ENCODE measurements at regions of chr10 and their contacts with region 1.

Region 1: GRCh38 chr10:100518761-100519241 is 860 bp downstream of the SEC31B start:
- DNase-seq: peak; percentile 51 to 56 (median 53)
- H3K4me3 ChIP-seq: peak overlapping the region in 3 of 7 experiments; percentile 46 to 62 (median 62)
- H3K27ac ChIP-seq: no peak overlapping the region
- H3K4me1 ChIP-seq: peaks cover 0 to 10% (median 3%) of the 10 kb centered on the region in 4 experiments
- H3K27me3 ChIP-seq: peaks cover 0 to 20% (median 13%) of the 10 kb centered on the region in 5 experiments

Region 2: DNA sequence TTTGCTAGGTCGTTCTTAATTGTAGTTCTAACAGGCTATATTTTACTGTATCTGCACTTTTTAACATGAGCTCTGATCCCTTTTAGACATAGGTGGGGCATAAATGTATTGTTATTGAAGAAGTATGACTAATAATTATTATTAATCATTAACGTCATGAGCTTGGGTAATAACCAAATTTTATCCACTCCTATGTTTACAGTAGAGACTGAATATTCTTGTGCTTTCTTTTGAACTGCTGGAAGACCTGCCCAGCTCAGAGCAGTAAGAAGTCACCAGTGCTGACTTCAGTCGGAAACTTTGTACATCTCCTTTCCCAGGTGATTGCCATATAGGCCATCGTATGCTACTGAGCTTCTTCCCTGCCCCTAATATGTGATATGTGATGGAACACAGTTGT is 207.5 kb before region 1 on chr10:
- CTCF ChIA-PET with region 1: no interaction called
- POLR2A ChIA-PET with region 1: no interaction called
- DNase-seq: no peak
- H3K4me3 ChIP-seq: no peak overlapping the region
- H3K27ac ChIP-seq: no peak overlapping the region
- H3K4me1 ChIP-seq: no peaks in the 10 kb centered on the region
- H3K27me3 ChIP-seq: peaks cover 0 to 9% (median 7%) of the 10 kb centered on the region in 5 experiments

Region 3: GRCh38 chr10:100338434-100339036 is 180.3 kb before region 1 on chr10:
- CTCF ChIA-PET with region 1: interaction called, 110 read pairs
- POLR2A ChIA-PET with region 1: interaction called, 3 read pairs
- DNase-seq: peak; percentile 53 to 73 (median 62)
- H3K4me3 ChIP-seq: no peak overlapping the region
- H3K27ac ChIP-seq: no peak overlapping the region
- H3K4me1 ChIP-seq: peaks cover 0 to 24% (median 3%) of the 10 kb centered on the region in 4 experiments
- H3K27me3 ChIP-seq: peaks cover 0 to 9% (median 2%) of the 10 kb centered on the region in 5 experiments

Region 4: DNA sequence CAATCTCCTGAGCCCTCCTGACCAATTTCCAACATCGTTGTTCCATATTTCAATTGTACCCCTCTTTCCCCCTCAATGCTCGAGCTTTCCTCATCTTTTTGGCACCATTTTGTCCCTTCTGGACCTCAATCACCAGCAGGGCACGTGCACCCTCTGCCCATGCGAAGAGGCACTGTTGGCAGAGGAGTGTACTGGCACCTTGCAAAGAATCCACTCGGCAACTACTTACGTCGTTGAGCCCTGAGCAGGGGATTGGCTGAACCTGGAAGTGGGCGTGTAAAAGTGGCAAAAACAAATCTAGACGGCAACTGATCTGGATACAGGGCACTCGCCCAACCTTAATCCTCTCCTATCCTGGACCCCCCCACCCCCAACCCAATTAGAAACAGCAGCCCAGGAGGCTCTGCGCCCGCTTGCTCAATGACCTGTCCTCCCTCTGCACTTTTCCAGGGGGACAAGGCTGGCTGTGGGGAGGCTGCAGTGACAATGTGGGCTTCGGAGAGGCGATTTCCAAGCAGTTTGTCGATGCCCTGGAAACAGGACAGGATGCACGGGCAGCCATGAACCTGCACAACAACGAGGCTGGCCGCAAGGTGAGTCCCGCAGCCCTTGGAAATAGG is 37.2 kb before region 1 on chr10:
- CTCF ChIA-PET with region 1: interaction called, 10 read pairs
- POLR2A ChIA-PET with region 1: no interaction called
- DNase-seq: peak; percentile 91 to 96 (median 94)
- H3K4me3 ChIP-seq: peak overlapping the region in 6 of 7 experiments; percentile 45 to 73 (median 61)
- H3K27ac ChIP-seq: no peak overlapping the region
- H3K4me1 ChIP-seq: peaks cover 0 to 22% (median 15%) of the 10 kb centered on the region in 4 experiments
- H3K27me3 ChIP-seq: peaks cover 2 to 41% (median 13%) of the 10 kb centered on the region in 5 experiments

Region 5: DNA sequence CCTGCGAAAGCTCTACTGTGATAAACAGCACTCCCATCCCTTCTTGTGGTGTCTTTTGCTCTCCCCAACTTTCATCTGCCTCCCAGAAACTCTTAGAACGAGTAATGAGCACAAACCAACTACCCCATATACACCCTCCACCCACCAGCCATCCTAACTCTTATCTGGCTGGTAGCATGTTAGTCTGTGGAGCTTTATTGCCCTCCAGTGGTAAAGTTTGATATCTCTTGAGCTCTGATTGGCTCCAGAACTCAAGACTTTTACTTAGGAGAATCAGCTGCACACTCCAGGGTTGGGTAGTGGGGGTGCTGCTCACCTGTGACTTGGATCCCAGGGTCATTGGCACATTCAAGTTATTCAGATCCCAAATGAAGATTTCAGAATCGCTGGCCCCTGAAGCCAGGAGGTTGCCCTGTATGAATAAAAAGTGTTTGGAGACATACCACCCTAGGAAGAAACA is 10.1 kb before region 1 on chr10:
- CTCF ChIA-PET with region 1: interaction called, 26 read pairs
- POLR2A ChIA-PET with region 1: interaction called, 4 read pairs
- DNase-seq: peak; percentile 64 to 82 (median 78)
- H3K4me3 ChIP-seq: no peak overlapping the region
- H3K27ac ChIP-seq: no peak overlapping the region
- H3K4me1 ChIP-seq: peaks cover 3 to 28% (median 11%) of the 10 kb centered on the region in 4 experiments
- H3K27me3 ChIP-seq: no peaks in the 10 kb centered on the region

Region 6: DNA sequence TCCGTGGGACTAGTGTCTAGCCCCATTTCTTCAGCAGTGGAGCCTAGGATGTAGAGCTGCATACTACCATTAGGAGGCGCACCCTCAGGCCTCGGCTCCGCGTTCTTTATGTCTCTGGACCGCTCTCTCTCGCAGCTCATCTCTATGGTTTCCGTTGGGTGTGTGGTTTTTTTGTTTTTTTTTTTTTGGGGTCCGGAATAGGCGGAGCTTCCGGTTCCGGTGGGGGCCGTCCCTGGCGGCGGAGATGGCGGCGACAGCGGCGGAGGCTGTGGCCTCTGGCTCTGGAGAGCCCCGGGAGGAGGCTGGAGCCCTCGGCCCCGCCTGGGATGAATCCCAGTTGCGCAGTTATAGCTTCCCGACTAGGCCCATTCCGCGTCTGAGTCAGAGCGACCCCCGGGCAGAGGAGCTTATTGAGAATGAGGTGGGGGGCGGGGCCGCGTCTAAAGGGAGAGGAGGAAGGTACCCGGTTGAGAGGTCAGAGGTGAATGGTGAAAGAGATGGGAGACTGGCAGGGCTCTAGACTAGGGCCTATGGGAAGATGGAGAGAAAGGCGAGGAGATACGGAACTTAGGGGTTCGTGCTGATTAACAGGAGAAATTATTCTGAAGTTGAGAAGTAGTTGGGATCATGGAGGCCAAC is 17.0 kb after region 1 on chr10 and contains the start of gene HIF1AN:
- CTCF ChIA-PET with region 1: interaction called, 38 read pairs
- POLR2A ChIA-PET with region 1: no interaction called
- DNase-seq: peak; percentile 97 to 98 (median 97)
- H3K4me3 ChIP-seq: peak within 1 kb of the TSS; percentile 81 to 97 (median 88)
- H3K27ac ChIP-seq: peak within 1 kb of the TSS; percentile 50 to 71
- H3K4me1 ChIP-seq: peaks cover 7 to 19% (median 15%) of the 10 kb centered on the region in 4 experiments
- H3K27me3 ChIP-seq: no peaks in the 10 kb centered on the region

Region 7: GRCh38 chr10:100696477-100696901 is 177.7 kb after region 1 on chr10:
- CTCF ChIA-PET with region 1: no interaction called
- POLR2A ChIA-PET with region 1: no interaction called
- DNase-seq: no peak
- H3K4me3 ChIP-seq: no peak overlapping the region
- H3K27ac ChIP-seq: no peak overlapping the region
- H3K4me1 ChIP-seq: peaks cover 0 to 6% (median 3%) of the 10 kb centered on the region in 4 experiments
- H3K27me3 ChIP-seq: peaks cover 11 to 66% (median 29%) of the 10 kb centered on the region in 5 experiments

Measured in common myeloid progenitor, CD34-positive (primary cell).